ENCODE measurements at regions of chr5 and their contacts with region 1.

Region 1: DNA sequence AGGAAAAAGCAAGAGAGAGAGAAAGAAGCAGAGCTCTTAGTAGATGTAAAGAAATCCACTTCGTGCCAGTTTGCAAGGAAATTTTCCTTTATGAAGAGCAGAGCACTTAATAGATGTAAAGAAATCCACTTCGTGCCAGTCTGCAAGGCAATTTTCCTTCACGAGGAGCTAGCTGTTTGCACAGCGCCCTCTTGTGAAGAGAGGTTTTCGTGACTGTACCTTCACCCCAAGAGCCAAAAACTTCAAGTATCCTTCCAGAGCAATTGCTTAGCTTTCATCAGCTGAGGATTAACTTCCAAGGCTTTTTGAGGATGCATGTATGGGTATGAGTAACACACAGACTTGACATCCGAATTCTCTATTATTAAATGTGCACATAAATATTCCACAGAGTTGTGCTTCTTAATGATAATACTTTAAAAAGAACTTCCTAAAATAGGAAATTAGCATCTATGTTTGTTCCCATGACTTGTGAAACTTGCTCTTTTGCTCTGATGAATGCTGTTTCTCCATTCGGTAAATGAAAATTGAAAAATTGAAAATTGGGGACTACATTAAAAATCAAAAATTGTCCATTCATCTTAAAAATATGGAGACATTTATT is 525.6 kb downstream of the PDE4D start:
- DNase-seq: peak in 4 of 5 donors; percentile 34 to 68 (median 59)
- ATAC-seq: peak; percentile 48 to 79 (median 71)
- H3K4me3 ChIP-seq: no peak overlapping the region
- H3K27ac ChIP-seq: no peak overlapping the region
- H3K4me1 ChIP-seq: peaks cover 0 to 12% (median 0%) of the 10 kb centered on the region in 12 donors
- H3K27me3 ChIP-seq: no peaks in the 10 kb centered on the region
- CTCF ChIP-seq: peak; percentile 65 to 86 (median 80)
- POLR2A ChIP-seq: no peak

Region 2: DNA sequence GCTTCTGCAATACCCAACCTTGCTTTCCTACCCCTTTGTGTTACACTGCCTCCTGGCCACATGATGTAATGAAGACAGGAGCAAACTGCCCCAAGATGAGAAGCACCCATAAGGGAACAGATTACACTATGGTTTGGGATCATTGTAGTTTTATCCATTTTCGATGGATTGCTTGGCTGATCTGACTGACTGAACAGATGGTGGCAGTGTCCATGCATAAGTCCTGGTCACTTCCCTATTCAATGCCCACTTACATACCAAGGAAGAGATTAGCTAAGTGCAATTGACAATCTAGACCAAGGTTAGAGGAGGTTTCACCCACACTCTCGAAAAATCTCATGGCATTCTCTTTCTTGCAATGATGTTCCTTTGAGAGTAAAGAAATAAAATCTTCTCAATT is 465.1 kb before region 1 on chr5:
- intact Hi-C with region 1: loop called in 2 of 10 experiments (anchors 10 kb)
- DNase-seq: no peak
- ATAC-seq: peak in 2 of 4 donors; percentile 39 to 58
- H3K4me3 ChIP-seq: no peak overlapping the region
- H3K27ac ChIP-seq: no peak overlapping the region
- H3K4me1 ChIP-seq: peaks cover 0 to 4% (median 0%) of the 10 kb centered on the region in 12 donors
- H3K27me3 ChIP-seq: no peaks in the 10 kb centered on the region
- CTCF ChIP-seq: peak in 3 of 12 donors; percentile 5 to 16 (median 12)
- POLR2A ChIP-seq: no peak

Region 3: DNA sequence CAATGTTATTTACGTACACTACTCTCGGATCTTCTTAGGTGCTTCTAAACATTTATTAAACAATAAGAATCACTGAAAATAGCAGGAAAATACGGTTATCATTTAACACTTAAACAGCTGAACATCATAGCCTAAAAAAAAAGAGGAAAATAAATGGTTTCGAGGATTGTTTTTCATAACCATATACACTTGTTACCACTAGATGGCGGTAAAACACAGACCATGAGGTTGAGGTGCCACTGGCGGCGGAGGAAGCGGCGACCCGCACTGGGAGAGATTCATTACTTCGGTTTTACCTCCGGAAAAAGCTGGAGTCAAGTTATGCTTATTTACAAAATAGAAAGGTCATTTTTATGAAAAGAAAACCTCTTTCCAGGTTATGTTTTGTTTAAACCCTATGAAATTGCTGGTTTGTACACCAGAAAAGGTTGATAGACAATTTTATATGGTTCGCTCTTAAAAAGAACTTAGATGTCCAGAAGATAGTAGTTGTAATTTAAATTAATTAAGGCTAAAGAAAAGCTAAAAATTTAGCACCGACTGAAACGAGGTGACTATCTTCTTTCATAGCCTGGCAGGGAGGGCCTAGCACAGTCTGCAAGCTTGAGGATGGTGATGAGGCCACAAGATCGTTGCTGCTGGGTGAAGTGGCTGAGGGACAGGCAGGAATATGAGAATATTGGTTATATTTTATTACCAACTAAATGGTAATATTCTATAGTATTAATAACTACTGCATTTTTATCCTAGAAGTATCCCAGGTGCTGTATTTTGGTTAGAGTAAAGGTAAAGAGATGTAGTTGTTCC is 179.3 kb before region 1 on chr5:
- intact Hi-C with region 1: loop called in 8 of 10 experiments (anchors 2 to 5 kb)
- DNase-seq: peak; percentile 62 to 80 (median 73)
- ATAC-seq: peak; percentile 58 to 83 (median 80)
- H3K4me3 ChIP-seq: peak overlapping the region in 10 of 12 donors; percentile 2 to 51 (median 34)
- H3K27ac ChIP-seq: peak overlapping the region in 6 of 12 donors; percentile 14 to 76 (median 20)
- H3K4me1 ChIP-seq: peaks cover 0 to 29% (median 0%) of the 10 kb centered on the region in 12 donors
- H3K27me3 ChIP-seq: no peaks in the 10 kb centered on the region
- CTCF ChIP-seq: peak; percentile 77 to 92 (median 83)
- POLR2A ChIP-seq: no peak

Region 4: DNA sequence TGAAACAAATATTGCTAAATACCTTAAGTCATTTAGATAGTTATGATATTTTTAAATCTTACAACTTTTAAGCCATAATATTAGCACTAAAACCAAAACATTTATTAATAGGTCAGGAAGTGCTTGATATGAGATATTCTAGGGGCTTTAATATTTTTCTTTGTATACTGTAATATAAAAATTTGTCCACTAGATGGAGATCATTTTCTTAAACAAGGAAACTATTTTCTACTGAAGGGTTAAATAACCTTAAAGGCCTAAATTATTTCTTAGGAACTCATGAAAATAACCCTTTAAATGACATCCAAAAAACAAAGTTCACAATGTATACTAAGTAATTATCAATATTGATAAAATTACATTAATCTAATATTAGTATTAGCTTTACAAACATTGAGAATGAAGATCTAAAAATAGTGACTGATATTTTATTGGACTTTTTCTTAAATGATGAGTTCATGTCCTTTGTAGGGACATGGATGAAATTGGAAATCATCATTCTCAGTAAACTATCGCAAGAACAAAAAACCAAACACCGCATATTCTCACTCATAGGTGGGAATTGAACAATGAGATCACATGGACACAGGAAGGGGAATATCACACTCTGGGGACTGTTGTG is 149.4 kb before region 1 on chr5:
- intact Hi-C with region 1: loop called in 9 of 10 experiments (anchors 2 to 5 kb)
- DNase-seq: no peak
- ATAC-seq: no peak
- H3K4me3 ChIP-seq: no peak overlapping the region
- H3K27ac ChIP-seq: no peak overlapping the region
- H3K4me1 ChIP-seq: peaks cover 0 to 28% (median 9%) of the 10 kb centered on the region in 12 donors
- H3K27me3 ChIP-seq: no peaks in the 10 kb centered on the region
- CTCF ChIP-seq: peak; percentile 35 to 62 (median 48)
- POLR2A ChIP-seq: no peak

Region 5: GRCh38 chr5:59282726-59283125 is 85.2 kb before region 1 on chr5:
- intact Hi-C with region 1: loop called in 3 of 10 experiments (anchors 5 to 10 kb)
- DNase-seq: no peak
- ATAC-seq: no peak
- H3K4me3 ChIP-seq: no peak overlapping the region
- H3K27ac ChIP-seq: no peak overlapping the region
- H3K4me1 ChIP-seq: peaks cover 0 to 11% (median under 1%) of the 10 kb centered on the region in 12 donors
- H3K27me3 ChIP-seq: no peaks in the 10 kb centered on the region
- CTCF ChIP-seq: no peak
- POLR2A ChIP-seq: no peak

Measured in heart left ventricle (tissue), 16 donors.